ENCODE measurements at regions of chr6 and their contacts with region 1.

Region 1: GRCh38 chr6:159739341-159739740 is 12.0 kb downstream of the WTAP start:
- DNase-seq: no peak
- ATAC-seq: no peak
- H3K4me3 ChIP-seq: no peak overlapping the region
- H3K4me3 Mint-ChIP-seq: no peak overlapping the region
- H3K27ac ChIP-seq: no peak overlapping the region
- H3K27ac Mint-ChIP-seq: no peak overlapping the region
- H3K4me1 ChIP-seq: peaks cover 12% of the 10 kb centered on the region
- H3K4me1 Mint-ChIP-seq: peaks cover 64% of the 10 kb centered on the region
- H3K27me3 ChIP-seq: no peaks in the 10 kb centered on the region
- H3K27me3 Mint-ChIP-seq: no peaks in the 10 kb centered on the region
- CTCF ChIP-seq: no peak

Region 2: GRCh38 chr6:159756508-159756907 is 17.2 kb after region 1 on chr6:
- CTCF ChIA-PET with region 1: interaction called, 3 read pairs
- POLR2A ChIA-PET with region 1: interaction called, 7 read pairs
- intact Hi-C with region 1: loop called in 1 of 2 experiments (anchors 2 kb)
- DNase-seq: no peak
- ATAC-seq: no peak
- H3K4me3 ChIP-seq: no peak overlapping the region
- H3K4me3 Mint-ChIP-seq: no peak overlapping the region
- H3K27ac ChIP-seq: no peak overlapping the region
- H3K27ac Mint-ChIP-seq: peak overlapping the region; percentile 39
- H3K4me1 ChIP-seq: peaks cover 10% of the 10 kb centered on the region
- H3K4me1 Mint-ChIP-seq: peaks cover 30% of the 10 kb centered on the region
- H3K27me3 ChIP-seq: no peaks in the 10 kb centered on the region
- H3K27me3 Mint-ChIP-seq: no peaks in the 10 kb centered on the region
- CTCF ChIP-seq: no peak

Region 3: DNA sequence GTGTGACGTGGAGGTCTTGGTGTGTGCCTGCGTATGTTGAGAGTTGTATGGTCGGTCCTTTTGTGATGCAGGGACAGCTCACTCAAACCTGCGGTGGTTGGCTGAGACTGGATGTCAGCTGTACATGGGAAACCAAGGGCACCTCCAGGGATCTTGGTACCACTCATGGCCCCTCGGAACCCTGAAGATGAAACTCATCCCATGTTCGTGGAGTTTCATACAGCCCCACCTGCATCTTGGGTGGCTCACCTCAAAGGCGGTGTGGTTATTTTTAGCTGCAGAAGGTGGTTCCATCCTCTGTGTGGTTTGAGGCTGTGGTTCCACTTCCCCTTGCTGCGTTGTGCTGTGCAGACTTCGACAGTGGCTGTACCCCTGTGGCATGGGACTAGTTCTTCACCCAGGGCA is 329.7 kb after region 1 on chr6:
- CTCF ChIA-PET with region 1: no interaction called
- POLR2A ChIA-PET with region 1: no interaction called
- intact Hi-C with region 1: no loop called
- DNase-seq: peak in 8 of 14 experiments; percentile 5 to 68 (median 10)
- ATAC-seq: peak; percentile 68
- H3K4me3 ChIP-seq: no peak overlapping the region
- H3K4me3 Mint-ChIP-seq: peak overlapping the region; percentile 3
- H3K27ac ChIP-seq: no peak overlapping the region
- H3K27ac Mint-ChIP-seq: no peak overlapping the region
- H3K4me1 ChIP-seq: peaks cover 24% of the 10 kb centered on the region
- H3K4me1 Mint-ChIP-seq: peaks cover 46% of the 10 kb centered on the region
- H3K27me3 ChIP-seq: no peaks in the 10 kb centered on the region
- H3K27me3 Mint-ChIP-seq: no peaks in the 10 kb centered on the region
- CTCF ChIP-seq: no peak